Activated T-helper 1 cell treated with anti-CD3 and anti-CD28 coated beads, Interleukin-12 subunit alpha, Interleukin-12 subunit beta, Interleukin-2, Interleukin-4 antibody, amounts not matched to agents 30 ng/mL and 10 ng/mL and 1 ng/mL, durations not matched to agents 14 hours and 24 hours and 36 hours (primary cell): ENCODE measurements at regions of chr12 and their contacts with region 1.

Region 1: GRCh38 chr12:117367011-117367638 is 5.7 kb upstream of the NOS1 start:
- DNase-seq: peak; percentile 27
- H3K4me3 Mint-ChIP-seq: no peak overlapping the region
- H3K27ac Mint-ChIP-seq: no peak overlapping the region
- H3K4me1 Mint-ChIP-seq: no peaks in the 10 kb centered on the region
- H3K27me3 Mint-ChIP-seq: peaks cover 27% of the 10 kb centered on the region

Region 2: GRCh38 chr12:117212563-117213190 is 154.4 kb before region 1 on chr12:
- intact Hi-C with region 1: loop called (anchors 5 kb)
- DNase-seq: peak; percentile 22
- H3K4me3 Mint-ChIP-seq: no peak overlapping the region
- H3K27ac Mint-ChIP-seq: no peak overlapping the region
- H3K4me1 Mint-ChIP-seq: no peaks in the 10 kb centered on the region
- H3K27me3 Mint-ChIP-seq: peaks cover 9% of the 10 kb centered on the region

Region 3: DNA sequence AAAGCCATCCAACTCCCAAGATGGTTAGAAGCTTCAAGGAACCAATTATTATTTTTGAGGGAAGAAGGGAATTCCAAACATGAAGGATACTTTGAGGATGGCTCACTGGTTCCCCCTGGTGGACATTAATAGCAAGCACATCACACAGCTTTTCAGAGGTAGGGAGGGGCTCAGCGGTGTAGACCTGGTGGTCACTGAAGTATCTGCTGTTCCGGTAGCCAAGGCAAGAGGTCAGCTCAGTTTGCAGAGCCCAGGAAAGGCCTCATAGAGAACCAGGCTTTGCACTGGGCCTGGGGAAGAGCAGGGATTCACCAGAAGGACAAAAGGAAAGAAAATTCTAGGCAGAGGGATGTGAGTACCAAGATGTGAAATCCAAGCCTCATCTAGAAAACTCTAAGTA is 482.9 kb after region 1 on chr12:
- intact Hi-C with region 1: loop called (anchors 5 kb)
- DNase-seq: no peak
- H3K4me3 Mint-ChIP-seq: no peak overlapping the region
- H3K27ac Mint-ChIP-seq: no peak overlapping the region
- H3K4me1 Mint-ChIP-seq: no peaks in the 10 kb centered on the region
- H3K27me3 Mint-ChIP-seq: peaks cover 2% of the 10 kb centered on the region